ENCODE measurements at regions of chr4 and their contacts with region 1.

Region 1: GRCh38 chr4:3797831-3798790 is 31.9 kb downstream of the ADRA2C start:
- DNase-seq: no peak
- H3K4me3 ChIP-seq: no peak overlapping the region
- CTCF ChIP-seq: no peak

Region 2: DNA sequence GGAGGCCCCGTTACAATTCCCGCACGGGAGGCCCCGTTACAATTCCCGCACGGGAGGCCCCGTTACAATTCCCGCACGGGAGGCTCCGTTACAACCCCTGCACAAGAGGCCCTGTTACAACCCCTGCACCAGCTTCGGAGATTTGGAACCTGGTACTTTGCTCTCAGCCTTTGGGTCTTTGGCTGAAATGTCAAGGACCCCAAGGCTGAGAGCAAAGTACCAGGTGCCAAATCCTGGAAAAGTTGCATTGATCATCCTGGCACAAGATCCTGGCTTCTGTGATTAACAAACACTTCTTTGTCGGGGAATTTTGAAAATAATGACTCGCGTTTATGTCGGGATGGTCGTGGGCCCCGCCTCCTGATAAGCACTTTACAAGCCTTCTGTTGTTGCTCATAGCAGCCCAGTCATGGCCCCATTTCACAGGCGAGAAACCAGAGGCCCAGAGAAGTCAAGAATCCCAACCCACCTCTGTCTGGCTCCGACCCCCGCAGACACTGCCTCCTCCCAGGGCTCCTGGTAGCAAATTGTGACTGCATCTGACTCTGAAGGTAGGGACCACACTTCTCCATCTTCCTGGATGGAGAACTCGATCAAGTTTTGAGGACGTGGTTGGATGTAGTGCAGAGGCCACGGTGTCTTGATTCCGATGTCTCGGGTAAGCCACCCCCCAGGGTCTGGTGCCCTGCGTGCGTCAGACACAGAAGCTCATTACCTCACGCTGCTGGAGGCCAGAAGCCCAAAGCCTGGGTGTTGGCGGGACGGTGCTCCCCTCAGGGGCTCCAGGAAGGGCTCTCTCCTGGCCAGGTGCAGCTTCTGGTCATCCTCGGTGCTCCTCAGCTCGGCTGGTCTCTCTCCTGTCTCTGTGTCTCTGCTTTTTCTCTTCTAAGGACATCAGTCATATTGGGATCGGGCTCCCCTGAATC is 28.4 kb after region 1 on chr4:
- in situ Hi-C with region 1: no loop called
- DNase-seq: no peak
- H3K4me3 ChIP-seq: no peak overlapping the region
- CTCF ChIP-seq: no peak

Region 3: GRCh38 chr4:3836756-3837601 is 38.9 kb after region 1 on chr4:
- in situ Hi-C with region 1: loop called (anchors 5 kb)
- DNase-seq: no peak
- H3K4me3 ChIP-seq: no peak overlapping the region
- CTCF ChIP-seq: no peak

Measured in astrocyte of the cerebellum (primary cell).